Ovary (tissue), 10 donors: ENCODE measurements at regions of chr20 and their contacts with region 1.

Region 1: DNA sequence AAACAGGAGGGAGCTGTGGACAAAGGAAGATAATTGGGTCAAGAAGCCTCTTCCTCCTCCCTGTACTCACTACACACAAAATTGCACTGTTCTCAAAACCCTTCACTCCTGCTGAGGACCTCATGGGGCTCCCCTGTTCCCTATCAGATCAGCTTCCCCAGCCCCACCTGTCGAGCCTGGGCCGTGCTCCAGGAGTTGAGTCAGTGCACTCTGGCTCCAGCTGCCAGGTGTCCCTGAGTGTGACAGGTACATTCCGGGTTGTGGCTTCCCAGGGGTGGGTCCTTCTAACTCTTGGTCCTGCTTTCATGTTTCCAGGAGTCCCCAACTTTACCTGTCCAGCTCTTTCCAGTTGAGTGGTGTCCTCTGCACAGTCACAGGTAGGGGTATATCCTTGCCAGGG is 8.4 kb downstream of the RAB5IF start:
- DNase-seq: no peak
- H3K4me3 ChIP-seq: no peak overlapping the region
- H3K27ac ChIP-seq: no peak overlapping the region
- H3K4me1 ChIP-seq: no peaks in the 10 kb centered on the region
- H3K27me3 ChIP-seq: no peaks in the 10 kb centered on the region
- CTCF ChIP-seq: no peak
- EP300 ChIP-seq: no peak
- POLR2A ChIP-seq: no peak

Region 2: GRCh38 chr20:36632487-36633284 is 18.7 kb after region 1 on chr20:
- intact Hi-C with region 1: no loop called
- DNase-seq: no peak
- H3K4me3 ChIP-seq: no peak overlapping the region
- H3K27ac ChIP-seq: no peak overlapping the region
- H3K4me1 ChIP-seq: no peaks in the 10 kb centered on the region
- H3K27me3 ChIP-seq: no peaks in the 10 kb centered on the region
- CTCF ChIP-seq: no peak
- EP300 ChIP-seq: no peak
- POLR2A ChIP-seq: no peak

Region 3: DNA sequence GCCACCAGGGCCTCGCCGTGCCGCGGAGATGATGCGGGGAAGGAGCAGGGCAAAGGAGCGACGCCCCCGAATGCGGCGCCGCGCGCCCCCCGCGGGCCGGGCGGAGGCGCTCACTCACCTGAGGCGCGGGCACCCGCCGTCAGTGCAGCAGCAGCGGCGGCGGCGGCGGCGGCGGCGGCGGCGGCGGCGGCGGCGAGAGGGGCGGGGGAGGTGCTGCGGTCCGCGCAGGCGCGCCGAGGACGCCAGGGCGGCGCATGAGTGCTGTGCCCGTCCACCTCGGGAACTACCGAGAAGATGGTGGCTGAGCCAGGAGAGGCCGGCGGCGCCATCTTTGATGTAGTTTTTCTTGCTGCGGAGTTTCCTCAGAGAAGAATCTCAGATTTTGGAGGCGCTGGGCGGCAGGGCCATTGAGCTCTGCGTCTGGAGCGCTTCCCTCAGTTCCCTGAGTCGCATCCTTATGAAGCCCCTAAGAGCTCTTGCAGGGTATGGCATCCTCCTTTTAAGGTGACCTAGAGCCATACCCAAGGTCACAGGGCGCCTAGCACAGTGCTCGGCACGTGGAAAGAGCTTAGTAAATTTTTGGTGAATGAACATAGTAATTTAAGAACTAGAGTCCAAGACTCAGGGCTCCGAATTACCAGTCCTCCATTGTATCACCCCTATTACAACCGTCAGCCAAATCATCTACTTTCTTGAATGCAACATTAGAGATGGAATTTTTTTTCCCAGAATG is 132.1 kb after region 1 on chr20 and contains the start of gene NDRG3:
- intact Hi-C with region 1: loop called in 2 of 4 experiments (anchors 5 to 10 kb)
- DNase-seq: peak; percentile 91 to 94 (median 92)
- H3K4me3 ChIP-seq: peak within 1 kb of the TSS; percentile 92
- H3K27ac ChIP-seq: peak within 1 kb of the TSS; percentile 68 to 70
- H3K4me1 ChIP-seq: peaks cover 2% of the 10 kb centered on the region
- H3K27me3 ChIP-seq: no peaks in the 10 kb centered on the region
- CTCF ChIP-seq: peak in 1 of 3 donors; percentile 18
- EP300 ChIP-seq: no peak
- POLR2A ChIP-seq: no peak
- total RNA-seq, gene NDRG3: 16.7 to 30.1 (median 24.1) TPM

Region 4: DNA sequence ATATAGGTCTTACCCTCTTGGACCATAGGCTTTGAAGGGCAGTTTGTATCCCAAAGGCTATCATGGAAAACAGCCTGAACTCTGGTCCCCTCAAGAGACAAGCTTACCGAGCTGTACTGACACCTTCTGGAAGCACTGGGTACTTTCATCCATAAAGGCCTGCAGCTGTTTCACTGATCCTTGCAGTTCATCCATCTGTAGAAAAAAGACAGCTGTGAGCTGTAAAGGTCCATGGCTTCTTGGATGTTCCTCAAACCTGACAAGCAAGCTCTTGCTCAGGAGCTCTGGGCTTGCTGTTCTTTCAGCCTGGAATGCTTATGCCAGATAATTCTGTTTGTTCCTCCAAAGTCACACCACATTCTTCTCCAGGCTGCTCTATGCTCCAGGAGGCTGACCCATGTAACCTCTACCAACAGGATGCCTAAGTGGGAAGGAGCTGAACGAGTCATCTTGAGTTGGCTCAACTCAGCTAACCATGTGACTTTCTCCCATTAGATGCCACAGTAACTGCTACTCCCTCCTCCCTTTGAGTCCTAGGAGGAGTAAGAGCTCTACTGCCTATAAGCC is 140.8 kb after region 1 on chr20:
- intact Hi-C with region 1: loop called in 1 of 4 experiments (anchors 10 kb)
- DNase-seq: peak in 2 of 5 donors; percentile 44 to 64
- H3K4me3 ChIP-seq: no peak overlapping the region
- H3K27ac ChIP-seq: no peak overlapping the region
- H3K4me1 ChIP-seq: no peaks in the 10 kb centered on the region
- H3K27me3 ChIP-seq: no peaks in the 10 kb centered on the region
- CTCF ChIP-seq: peak; percentile 58 to 66 (median 64)
- EP300 ChIP-seq: no peak
- POLR2A ChIP-seq: no peak

Region 5: GRCh38 chr20:36886859-36887751 is 273.1 kb after region 1 on chr20:
- intact Hi-C with region 1: loop called in 1 of 4 experiments (anchors 10 kb)
- DNase-seq: peak; percentile 78 to 90 (median 88)
- H3K4me3 ChIP-seq: no peak overlapping the region
- H3K27ac ChIP-seq: no peak overlapping the region
- H3K4me1 ChIP-seq: no peaks in the 10 kb centered on the region
- H3K27me3 ChIP-seq: no peaks in the 10 kb centered on the region
- CTCF ChIP-seq: peak; percentile 76 to 89 (median 84)
- EP300 ChIP-seq: no peak
- POLR2A ChIP-seq: no peak